CD8-positive, alpha-beta T cell (primary cell): ENCODE measurements at regions of chr19 and their contacts with region 1.

Region 1: DNA sequence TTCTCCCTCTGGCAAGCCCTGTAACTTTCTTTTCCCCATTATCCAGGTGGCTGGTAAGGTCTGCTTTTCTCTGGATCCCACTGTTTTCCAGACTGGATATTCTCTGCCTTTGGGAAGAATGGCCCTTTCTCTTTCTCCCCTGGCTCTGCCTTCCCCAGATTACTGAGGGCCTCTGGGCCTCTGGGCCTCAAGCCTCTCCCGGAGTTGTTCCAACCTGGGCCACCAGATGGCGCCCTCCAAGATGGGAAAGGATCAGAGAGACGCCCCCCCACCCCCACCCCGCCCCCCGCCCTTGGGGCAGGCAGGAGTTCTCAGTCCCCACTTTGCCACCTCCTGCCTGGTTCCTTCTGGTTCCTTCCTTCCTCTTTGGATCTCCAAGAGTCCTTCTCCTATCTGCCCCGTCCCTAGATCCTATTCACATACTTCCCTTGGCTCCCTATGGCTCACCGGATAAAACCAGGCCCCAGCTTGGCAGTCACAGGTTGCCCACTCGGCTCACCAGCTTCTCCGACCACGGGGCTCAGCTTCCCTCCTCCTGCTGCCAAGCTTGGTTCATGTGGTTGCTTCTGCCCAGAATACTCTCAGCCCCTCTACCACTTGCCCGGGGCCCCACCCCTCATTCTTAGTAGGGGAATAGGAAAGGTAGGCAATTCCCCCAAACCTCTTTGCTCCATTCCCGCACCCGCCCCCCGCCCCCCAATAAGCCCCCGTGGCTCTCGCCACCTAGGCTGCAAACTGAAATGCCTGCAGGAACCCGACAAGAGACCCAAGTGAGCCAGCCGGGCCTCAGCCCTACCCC is 13.1 kb downstream of the EPS8L1 start:
- DNase-seq: peak; percentile 50 to 85 (median 77)
- ATAC-seq: peak; percentile 64
- H3K4me3 ChIP-seq: no peak overlapping the region
- H3K4me3 Mint-ChIP-seq: peak overlapping the region; percentile 58
- H3K27ac ChIP-seq: no peak overlapping the region
- H3K27ac Mint-ChIP-seq: no peak overlapping the region
- H3K4me1 ChIP-seq: peaks cover 18% of the 10 kb centered on the region
- H3K4me1 Mint-ChIP-seq: peaks cover 16% of the 10 kb centered on the region
- H3K27me3 ChIP-seq: peaks cover 13 to 18% of the 10 kb centered on the region in 2 experiments
- H3K27me3 Mint-ChIP-seq: peaks cover 44% of the 10 kb centered on the region
- CTCF ChIP-seq: peak; percentile 83

Region 2: GRCh38 chr19:55068950-55069855 is 19.5 kb before region 1 on chr19:
- CTCF ChIA-PET with region 1: interaction called, 23 read pairs
- POLR2A ChIA-PET with region 1: interaction called, 3 read pairs
- intact Hi-C with region 1: no loop called
- DNase-seq: peak in 1 of 9 experiments; percentile 21
- ATAC-seq: peak; percentile 62
- H3K4me3 ChIP-seq: no peak overlapping the region
- H3K4me3 Mint-ChIP-seq: peak overlapping the region; percentile 27
- H3K27ac ChIP-seq: no peak overlapping the region
- H3K27ac Mint-ChIP-seq: no peak overlapping the region
- H3K4me1 ChIP-seq: peaks cover 8% of the 10 kb centered on the region
- H3K4me1 Mint-ChIP-seq: peaks cover 8% of the 10 kb centered on the region
- H3K27me3 ChIP-seq: peaks cover 18 to 34% of the 10 kb centered on the region in 2 experiments
- H3K27me3 Mint-ChIP-seq: peaks cover 53% of the 10 kb centered on the region
- CTCF ChIP-seq: no peak

Region 3: DNA sequence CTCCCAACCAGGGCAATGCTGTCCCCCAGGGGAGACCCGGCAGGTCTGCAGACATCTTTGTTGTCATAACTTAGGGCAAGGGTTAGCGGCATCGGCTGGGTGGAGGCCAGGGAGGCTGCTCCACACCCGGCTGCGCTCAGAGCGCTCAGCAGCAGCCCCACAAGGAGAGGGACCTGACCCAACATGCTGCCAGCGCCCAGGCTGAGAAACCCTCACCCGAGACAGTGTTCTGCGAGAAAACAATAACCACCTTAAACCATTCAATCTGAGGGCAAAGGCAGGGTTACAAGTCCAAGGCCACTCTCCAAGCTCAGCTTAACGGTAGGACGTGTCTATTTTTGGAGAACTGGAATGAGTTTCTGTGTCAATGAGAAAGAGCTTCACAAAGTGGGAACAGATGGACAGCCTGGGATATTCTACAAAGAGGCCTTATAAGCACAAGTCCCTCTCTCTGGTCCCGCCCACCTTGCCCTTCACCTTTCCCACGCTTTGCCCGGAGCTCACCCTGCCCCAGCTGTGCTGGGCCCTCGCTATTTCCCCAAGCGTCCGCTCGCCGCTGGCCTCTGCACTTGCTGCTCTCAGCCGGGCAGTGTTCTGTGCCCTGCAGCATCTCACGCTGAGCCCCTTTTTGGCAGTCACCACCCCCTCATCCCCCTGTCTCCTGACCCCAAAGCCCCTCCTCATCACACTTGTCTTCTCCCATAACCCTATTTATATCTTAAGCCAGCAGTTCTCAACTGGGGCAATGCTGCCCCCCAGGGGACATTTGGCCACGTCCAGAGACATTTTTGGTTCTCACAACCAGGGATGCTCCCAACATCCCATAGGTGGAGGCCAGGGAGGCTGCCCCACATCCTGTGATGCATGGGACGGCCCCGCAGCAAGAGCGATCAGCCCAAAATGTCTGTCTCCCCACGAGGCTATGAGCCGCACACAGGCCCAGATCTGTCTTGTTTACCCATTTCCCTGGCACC is 11.1 kb after region 1 on chr19:
- CTCF ChIA-PET with region 1: interaction called, 10 read pairs
- POLR2A ChIA-PET with region 1: no interaction called
- intact Hi-C with region 1: no loop called
- DNase-seq: no peak
- ATAC-seq: no peak
- H3K4me3 ChIP-seq: no peak overlapping the region
- H3K4me3 Mint-ChIP-seq: no peak overlapping the region
- H3K27ac ChIP-seq: no peak overlapping the region
- H3K27ac Mint-ChIP-seq: no peak overlapping the region
- H3K4me1 ChIP-seq: no peaks in the 10 kb centered on the region
- H3K4me1 Mint-ChIP-seq: no peaks in the 10 kb centered on the region
- H3K27me3 ChIP-seq: peaks cover 0 to 2% of the 10 kb centered on the region in 2 experiments
- H3K27me3 Mint-ChIP-seq: no peaks in the 10 kb centered on the region
- CTCF ChIP-seq: no peak

Region 4: GRCh38 chr19:55132453-55133129 is 43.8 kb after region 1 on chr19:
- CTCF ChIA-PET with region 1: interaction called, 4 read pairs
- POLR2A ChIA-PET with region 1: no interaction called
- intact Hi-C with region 1: loop called in 1 of 2 experiments (anchors 1 kb)
- DNase-seq: no peak
- ATAC-seq: no peak
- H3K4me3 ChIP-seq: no peak overlapping the region
- H3K4me3 Mint-ChIP-seq: no peak overlapping the region
- H3K27ac ChIP-seq: no peak overlapping the region
- H3K27ac Mint-ChIP-seq: no peak overlapping the region
- H3K4me1 ChIP-seq: no peaks in the 10 kb centered on the region
- H3K4me1 Mint-ChIP-seq: no peaks in the 10 kb centered on the region
- H3K27me3 ChIP-seq: peaks cover 0 to 13% of the 10 kb centered on the region in 2 experiments
- H3K27me3 Mint-ChIP-seq: peaks cover 38% of the 10 kb centered on the region
- CTCF ChIP-seq: no peak

Region 5: GRCh38 chr19:55160128-55160985 is 71.6 kb after region 1 on chr19:
- CTCF ChIA-PET with region 1: interaction called, 8 read pairs
- POLR2A ChIA-PET with region 1: no interaction called
- intact Hi-C with region 1: loop called in 1 of 2 experiments (anchors 2 kb)
- DNase-seq: peak; percentile 69 to 91 (median 83)
- ATAC-seq: peak; percentile 96
- H3K4me3 ChIP-seq: no peak overlapping the region
- H3K4me3 Mint-ChIP-seq: no peak overlapping the region
- H3K27ac ChIP-seq: no peak overlapping the region
- H3K27ac Mint-ChIP-seq: no peak overlapping the region
- H3K4me1 ChIP-seq: peaks cover 14% of the 10 kb centered on the region
- H3K4me1 Mint-ChIP-seq: peaks cover 9% of the 10 kb centered on the region
- H3K27me3 ChIP-seq: peaks cover 15 to 29% of the 10 kb centered on the region in 2 experiments
- H3K27me3 Mint-ChIP-seq: peaks cover 58% of the 10 kb centered on the region
- CTCF ChIP-seq: peak; percentile 96